PC-9 (cell line): ENCODE measurements at regions of chr3 and their contacts with region 1.

Region 1: DNA sequence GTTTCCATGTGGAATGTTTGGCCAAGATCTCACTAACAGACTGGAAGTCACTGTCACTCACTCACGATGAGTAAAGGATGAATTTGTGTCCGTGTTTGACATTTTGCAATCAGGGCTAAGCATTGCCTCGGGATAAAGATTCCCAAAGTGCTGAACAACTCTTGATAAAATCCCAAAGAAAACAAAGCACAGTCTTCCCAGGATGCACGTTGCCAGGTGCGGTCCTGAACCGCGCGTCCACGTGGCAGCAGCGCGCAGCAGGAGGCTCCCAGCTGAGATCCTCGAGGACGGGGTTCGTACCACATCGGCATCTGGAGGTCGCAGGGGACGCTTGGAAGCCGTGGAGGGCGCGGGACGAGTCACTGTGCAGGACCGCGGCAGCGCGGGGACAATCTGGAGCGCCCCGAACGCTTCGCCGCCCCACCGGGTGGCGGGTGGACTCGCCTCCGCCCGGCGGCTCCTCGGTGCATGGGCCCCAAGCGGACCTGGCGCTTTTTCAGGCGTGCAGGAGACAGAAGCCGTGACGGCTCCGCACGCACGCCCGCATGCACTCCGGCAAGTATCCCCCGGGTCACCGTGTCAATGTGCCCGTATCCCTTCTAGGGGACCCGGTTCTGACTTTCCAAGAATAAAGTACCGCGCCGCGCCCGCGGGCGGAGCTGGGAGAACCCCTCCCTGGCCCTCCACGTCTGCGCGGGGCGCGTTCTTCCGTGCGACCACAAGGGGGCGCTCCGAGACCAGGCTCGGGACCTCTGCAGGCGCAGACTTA is 17.7 kb downstream of the CPN2 start:
- DNase-seq: peak; percentile 78 to 95
- H3K4me3 ChIP-seq: peak overlapping the region; percentile 57
- H3K27ac ChIP-seq: no peak overlapping the region; the same call in 1 of the 2 replicates
- H3K4me1 ChIP-seq: peaks cover 19% of the 10 kb centered on the region
- H3K27me3 ChIP-seq: no peaks in the 10 kb centered on the region
- CTCF ChIP-seq: peak; percentile 100

Region 2: GRCh38 chr3:193665370-193665989 is 667.9 kb before region 1 on chr3:
- CTCF ChIA-PET with region 1: interaction called, 3 read pairs
- POLR2A ChIA-PET with region 1: no interaction called
- intact Hi-C with region 1: loop called (anchors 5 kb)
- DNase-seq: peak in 1 of 2 experiments; percentile 70
- H3K4me3 ChIP-seq: no peak overlapping the region
- H3K27ac ChIP-seq: no peak overlapping the region
- H3K4me1 ChIP-seq: no peaks in the 10 kb centered on the region
- H3K27me3 ChIP-seq: no peaks in the 10 kb centered on the region
- CTCF ChIP-seq: peak; percentile 93

Region 3: DNA sequence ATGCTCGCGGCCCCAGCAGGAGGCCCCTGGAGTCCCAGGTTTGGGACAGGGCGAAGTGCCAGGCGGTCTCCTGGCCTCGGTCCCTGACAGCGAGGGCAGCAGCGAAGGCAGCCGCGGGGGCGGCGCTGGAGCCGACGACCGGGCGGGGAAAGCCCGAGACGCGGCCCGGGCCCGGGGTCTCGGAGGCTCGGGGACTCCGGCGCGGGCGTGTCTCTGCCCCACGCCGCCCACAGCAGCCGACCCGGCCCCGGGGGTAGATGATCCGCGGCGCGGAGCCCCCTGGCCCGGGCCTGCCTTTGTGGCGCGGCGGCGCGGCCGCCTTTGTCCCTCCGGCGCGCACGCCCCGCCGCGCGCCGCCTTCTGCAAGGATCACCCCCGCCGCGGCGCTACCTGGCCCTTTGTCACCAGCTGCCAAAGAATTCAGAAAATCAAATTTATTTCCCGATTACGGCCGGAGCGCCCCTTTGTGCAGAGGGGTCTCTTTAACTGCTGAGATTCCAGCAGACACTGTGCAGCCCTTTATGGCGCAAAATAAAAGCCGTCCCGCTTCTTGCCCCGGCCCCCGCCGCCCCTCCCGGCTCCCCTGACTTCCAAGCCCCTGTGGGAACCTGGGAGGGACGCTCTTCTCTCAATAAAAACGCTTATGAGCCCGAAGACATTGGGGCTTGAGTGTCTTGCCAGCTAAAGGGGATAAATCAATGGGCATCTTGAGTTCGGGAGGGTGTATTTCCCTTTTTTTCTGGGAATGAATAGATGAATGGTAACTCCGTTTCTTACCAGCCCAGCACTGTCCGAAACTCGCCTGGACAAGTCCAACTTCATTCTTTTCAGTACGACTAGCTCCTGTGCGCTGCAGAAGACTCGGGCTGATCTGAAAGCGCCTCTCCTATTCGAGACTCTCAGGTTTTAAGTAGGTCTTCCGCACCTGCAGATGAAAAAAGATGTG is 129.1 kb before region 1 on chr3:
- CTCF ChIA-PET with region 1: no interaction called
- POLR2A ChIA-PET with region 1: interaction called, 11 read pairs
- intact Hi-C with region 1: no loop called
- DNase-seq: peak; percentile 62 to 78
- H3K4me3 ChIP-seq: peak overlapping the region; percentile 58
- H3K27ac ChIP-seq: peak overlapping the region; percentile 71
- H3K4me1 ChIP-seq: peaks cover 47% of the 10 kb centered on the region
- H3K27me3 ChIP-seq: no peaks in the 10 kb centered on the region
- CTCF ChIP-seq: no peak

Region 4: GRCh38 chr3:194404365-194405140 is 71.2 kb after region 1 on chr3:
- CTCF ChIA-PET with region 1: interaction called, 3 read pairs
- POLR2A ChIA-PET with region 1: no interaction called
- intact Hi-C with region 1: loop called (anchors 1 kb)
- DNase-seq: peak; percentile 38 to 56
- H3K4me3 ChIP-seq: no peak overlapping the region
- H3K27ac ChIP-seq: no peak overlapping the region
- H3K4me1 ChIP-seq: no peaks in the 10 kb centered on the region
- H3K27me3 ChIP-seq: no peaks in the 10 kb centered on the region
- CTCF ChIP-seq: peak; percentile 96

Region 5: DNA sequence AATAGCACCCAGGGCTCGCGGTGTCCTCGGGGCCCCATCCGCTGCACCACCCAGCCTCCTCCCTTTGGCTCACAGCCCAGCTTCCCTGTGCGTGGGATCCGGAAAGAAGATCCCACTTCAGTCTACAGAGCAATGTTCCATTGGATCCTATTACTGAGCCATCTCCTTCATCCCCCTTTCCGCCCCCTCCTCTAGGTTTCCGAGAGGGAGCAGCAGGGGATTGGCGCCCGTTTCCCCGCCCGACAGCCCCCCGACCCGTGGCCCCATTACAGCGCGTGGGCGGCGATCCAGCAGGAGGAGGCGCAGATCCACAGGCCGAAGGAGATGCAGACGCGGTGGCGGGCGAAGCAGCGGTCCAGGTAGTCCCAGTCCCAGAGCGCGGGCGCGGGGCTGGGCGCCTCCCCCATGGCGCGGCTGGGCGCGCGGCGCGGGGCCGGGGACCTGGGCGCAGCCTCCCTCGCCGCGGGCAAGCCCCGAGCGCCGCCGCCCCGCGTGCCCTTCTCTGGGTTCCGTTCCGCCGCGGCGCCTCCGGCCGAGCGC is 299.5 kb after region 1 on chr3:
- CTCF ChIA-PET with region 1: no interaction called
- POLR2A ChIA-PET with region 1: no interaction called
- intact Hi-C with region 1: loop called (anchors 2 kb)
- DNase-seq: no peak
- H3K4me3 ChIP-seq: peak overlapping the region; percentile 74
- H3K27ac ChIP-seq: no peak overlapping the region
- H3K4me1 ChIP-seq: no peaks in the 10 kb centered on the region
- H3K27me3 ChIP-seq: no peaks in the 10 kb centered on the region
- CTCF ChIP-seq: no peak

Region 6: GRCh38 chr3:194671900-194672808 is 338.8 kb after region 1 on chr3 and contains the start of gene LSG1:
- CTCF ChIA-PET with region 1: no interaction called
- POLR2A ChIA-PET with region 1: no interaction called
- intact Hi-C with region 1: loop called (anchors 5 kb)
- DNase-seq: peak; percentile 71 to 93
- H3K4me3 ChIP-seq: peak within 1 kb of the TSS; percentile 99
- H3K27ac ChIP-seq: peak within 1 kb of the TSS; percentile 88
- H3K4me1 ChIP-seq: peaks cover 13% of the 10 kb centered on the region; the same call in 1 of the 2 replicates
- H3K27me3 ChIP-seq: no peaks in the 10 kb centered on the region
- CTCF ChIP-seq: no peak
- total RNA-seq, gene LSG1: 59.2 and 71.8 TPM in 2 replicates

Region 7: GRCh38 chr3:195259475-195260279 is 926.3 kb after region 1 on chr3:
- CTCF ChIA-PET with region 1: no interaction called
- POLR2A ChIA-PET with region 1: no interaction called
- intact Hi-C with region 1: loop called (anchors 10 kb)
- DNase-seq: peak; percentile 86 to 96
- H3K4me3 ChIP-seq: peak overlapping the region; percentile 70
- H3K27ac ChIP-seq: peak overlapping the region; percentile 74
- H3K4me1 ChIP-seq: peaks cover 13% of the 10 kb centered on the region
- H3K27me3 ChIP-seq: no peaks in the 10 kb centered on the region
- CTCF ChIP-seq: no peak